Heart left ventricle (tissue), 16 donors: ENCODE measurements at regions of chrX and their contacts with region 1.

Region 1: GRCh38 chrX:16664074-16664473 is 14.1 kb downstream of the S100G start:
- DNase-seq: no peak
- ATAC-seq: peak in 2 of 4 donors; percentile 41 to 63
- H3K4me3 ChIP-seq: no peak overlapping the region
- H3K27ac ChIP-seq: no peak overlapping the region
- H3K4me1 ChIP-seq: no peaks in the 10 kb centered on the region
- H3K27me3 ChIP-seq: peaks cover 0 to 21% (median 0%) of the 10 kb centered on the region in 9 donors
- CTCF ChIP-seq: peak in 4 of 12 donors; percentile 4 to 20 (median 14)
- POLR2A ChIP-seq: no peak

Region 2: GRCh38 chrX:16123222-16123786 is 540.8 kb before region 1 on chrX and contains the start of gene GRPR:
- intact Hi-C with region 1: loop called in 7 of 10 experiments (anchors 2 to 10 kb)
- DNase-seq: peak; percentile 54 to 84 (median 70)
- ATAC-seq: peak; percentile 75 to 94 (median 90)
- H3K4me3 ChIP-seq: no peak within 1 kb of the TSS
- H3K27ac ChIP-seq: no peak within 1 kb of the TSS
- H3K4me1 ChIP-seq: no peaks in the 10 kb centered on the region
- H3K27me3 ChIP-seq: peaks cover 0 to 43% (median 0%) of the 10 kb centered on the region in 9 donors
- CTCF ChIP-seq: peak; percentile 42 to 76 (median 64)
- POLR2A ChIP-seq: no peak
- total RNA-seq, gene GRPR: 0.16 to 0.58 (median 0.29) TPM

Region 3: GRCh38 chrX:16436348-16437188 is 227.5 kb before region 1 on chrX:
- intact Hi-C with region 1: loop called in 8 of 10 experiments (anchors 1 to 10 kb)
- DNase-seq: peak; percentile 59 to 70 (median 64)
- ATAC-seq: peak in 3 of 4 donors; percentile 84 to 95 (median 90)
- H3K4me3 ChIP-seq: no peak overlapping the region
- H3K27ac ChIP-seq: no peak overlapping the region
- H3K4me1 ChIP-seq: no peaks in the 10 kb centered on the region
- H3K27me3 ChIP-seq: peaks cover 0 to 20% (median 0%) of the 10 kb centered on the region in 9 donors
- CTCF ChIP-seq: peak; percentile 35 to 69 (median 54)
- POLR2A ChIP-seq: no peak